Caco-2 (cell line): ENCODE measurements at regions of chr13 and their contacts with region 1.

Region 1: GRCh38 chr13:91078093-91078679 is 269.3 kb upstream of the MIR17HG start:
- DNase-seq: peak in 1 of 2 experiments; percentile 15
- H3K4me3 ChIP-seq: no peak overlapping the region
- H3K4me3 Mint-ChIP-seq: no peak overlapping the region
- H3K27ac Mint-ChIP-seq: no peak overlapping the region
- H3K4me1 ChIP-seq: peaks cover 17% of the 10 kb centered on the region
- H3K4me1 Mint-ChIP-seq: peaks cover 23% of the 10 kb centered on the region
- H3K27me3 ChIP-seq: no peaks in the 10 kb centered on the region
- H3K27me3 Mint-ChIP-seq: no peaks in the 10 kb centered on the region
- CTCF ChIP-seq: peak; percentile 51 to 56

Region 2: DNA sequence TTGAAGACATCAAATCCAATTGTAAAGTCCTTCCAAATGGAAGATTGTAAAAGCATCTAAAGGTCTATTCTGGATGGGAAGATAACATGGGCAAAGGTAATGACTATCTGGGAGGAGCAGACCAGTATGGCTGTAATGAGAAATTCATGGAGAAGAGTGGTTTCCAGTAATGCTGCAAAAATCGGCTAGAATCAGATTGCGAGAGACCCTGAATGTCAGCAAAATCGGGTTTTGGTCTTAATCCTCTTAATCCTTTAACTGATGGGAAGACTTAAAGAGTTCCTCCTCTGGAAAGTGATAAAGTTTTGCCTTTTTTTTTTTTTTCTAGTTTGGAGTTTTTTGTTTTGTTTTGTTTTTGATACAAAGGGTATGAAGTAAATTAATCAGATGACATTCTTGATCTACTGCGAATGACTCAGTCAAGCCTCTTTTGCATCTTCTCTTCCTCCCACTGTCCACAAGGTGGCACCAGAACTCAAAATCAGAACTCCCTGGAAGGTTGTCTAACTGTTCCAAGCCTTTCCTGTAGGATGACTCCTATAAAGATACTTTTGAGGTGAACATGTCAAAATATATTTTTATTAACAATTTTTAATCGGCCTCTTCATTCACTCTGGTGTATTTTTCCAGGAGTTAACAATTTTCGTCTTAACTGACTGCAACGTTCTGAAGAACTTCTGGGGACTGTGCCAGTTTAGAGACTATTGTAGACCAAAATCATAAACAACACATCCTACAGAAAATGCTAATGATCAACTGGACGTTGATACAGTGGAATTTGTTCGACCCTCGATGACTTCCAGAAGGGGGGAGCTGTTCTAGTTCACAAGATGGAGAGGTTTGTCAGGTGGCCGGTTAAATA is 56.0 kb after region 1 on chr13:
- CTCF ChIA-PET with region 1: no interaction called
- POLR2A ChIA-PET with region 1: no interaction called
- intact Hi-C with region 1: loop called (anchors 2 kb)
- DNase-seq: peak; percentile 69 to 72
- H3K4me3 ChIP-seq: no peak overlapping the region
- H3K4me3 Mint-ChIP-seq: no peak overlapping the region
- H3K27ac Mint-ChIP-seq: peak overlapping the region; percentile 21
- H3K4me1 ChIP-seq: peaks cover 34% of the 10 kb centered on the region
- H3K4me1 Mint-ChIP-seq: peaks cover 16% of the 10 kb centered on the region
- H3K27me3 ChIP-seq: no peaks in the 10 kb centered on the region
- H3K27me3 Mint-ChIP-seq: no peaks in the 10 kb centered on the region
- CTCF ChIP-seq: peak; percentile 90 to 94